Esophagus muscularis mucosa (tissue), 4 donors: ENCODE measurements at regions of chr1 and their contacts with region 1.

Region 1: GRCh38 chr1:15128520-15129313 is 24.8 kb upstream of the TMEM51 start:
- DNase-seq: no peak
- H3K4me3 ChIP-seq: no peak overlapping the region
- H3K27ac ChIP-seq: no peak overlapping the region
- H3K4me1 ChIP-seq: no peaks in the 10 kb centered on the region
- H3K27me3 ChIP-seq: peaks cover 0 to 2% (median 0%) of the 10 kb centered on the region in 4 donors
- CTCF ChIP-seq: peak; percentile 85 to 91 (median 88)
- EP300 ChIP-seq: no peak
- POLR2A ChIP-seq: no peak

Region 2: DNA sequence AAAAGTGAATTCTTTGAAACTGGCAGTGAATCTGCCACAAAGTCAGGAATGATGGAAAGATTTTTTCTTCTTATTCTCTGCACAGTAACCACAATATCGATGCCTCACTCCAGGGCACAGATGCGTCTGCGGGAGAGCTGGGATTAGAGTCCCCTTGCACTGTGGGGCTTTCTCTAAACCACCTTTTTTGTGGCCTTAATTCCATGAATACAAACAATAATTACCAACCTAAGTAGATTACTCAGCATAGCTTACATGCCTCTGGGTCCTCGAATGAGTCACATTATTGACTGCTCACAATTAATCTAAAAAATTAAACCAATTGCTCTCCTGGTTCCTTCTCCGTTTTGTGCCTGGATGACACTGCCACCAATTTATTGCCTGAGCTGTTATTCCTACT is 404.5 kb before region 1 on chr1:
- intact Hi-C with region 1: no loop called
- DNase-seq: no peak
- H3K4me3 ChIP-seq: no peak overlapping the region
- H3K27ac ChIP-seq: no peak overlapping the region
- H3K4me1 ChIP-seq: no peaks in the 10 kb centered on the region
- H3K27me3 ChIP-seq: no peaks in the 10 kb centered on the region
- CTCF ChIP-seq: no peak
- EP300 ChIP-seq: no peak
- POLR2A ChIP-seq: no peak

Region 3: GRCh38 chr1:15304701-15305467 is 176.2 kb after region 1 on chr1:
- intact Hi-C with region 1: loop called (anchors 1 kb)
- DNase-seq: no peak
- H3K4me3 ChIP-seq: no peak overlapping the region
- H3K27ac ChIP-seq: no peak overlapping the region
- H3K4me1 ChIP-seq: peaks cover 0 to 6% (median 2%) of the 10 kb centered on the region in 4 donors
- H3K27me3 ChIP-seq: no peaks in the 10 kb centered on the region
- CTCF ChIP-seq: peak; percentile 87 to 92 (median 88)
- EP300 ChIP-seq: no peak
- POLR2A ChIP-seq: no peak

Region 4: GRCh38 chr1:15430787-15431570 is 302.3 kb after region 1 on chr1:
- intact Hi-C with region 1: loop called (anchors 10 kb)
- DNase-seq: no peak
- H3K4me3 ChIP-seq: no peak overlapping the region
- H3K27ac ChIP-seq: no peak overlapping the region
- H3K4me1 ChIP-seq: peaks cover 17 to 28% (median 23%) of the 10 kb centered on the region in 4 donors
- H3K27me3 ChIP-seq: no peaks in the 10 kb centered on the region
- CTCF ChIP-seq: peak; percentile 93 to 98 (median 95)
- EP300 ChIP-seq: no peak
- POLR2A ChIP-seq: no peak